ENCODE measurements at regions of chr9 and their contacts with region 1.

Region 1: GRCh38 chr9:123642291-123643278 is 286.6 kb downstream of the CRB2 start:
- DNase-seq: no peak
- ATAC-seq: no peak
- H3K4me3 ChIP-seq: no peak overlapping the region
- H3K4me3 Mint-ChIP-seq: no peak overlapping the region
- H3K27ac ChIP-seq: no peak overlapping the region
- H3K27ac Mint-ChIP-seq: no peak overlapping the region
- H3K4me1 ChIP-seq: peaks cover 17% of the 10 kb centered on the region
- H3K4me1 Mint-ChIP-seq: peaks cover 33% of the 10 kb centered on the region
- H3K27me3 ChIP-seq: no peaks in the 10 kb centered on the region
- H3K27me3 Mint-ChIP-seq: no peaks in the 10 kb centered on the region
- CTCF ChIP-seq: no peak

Region 2: DNA sequence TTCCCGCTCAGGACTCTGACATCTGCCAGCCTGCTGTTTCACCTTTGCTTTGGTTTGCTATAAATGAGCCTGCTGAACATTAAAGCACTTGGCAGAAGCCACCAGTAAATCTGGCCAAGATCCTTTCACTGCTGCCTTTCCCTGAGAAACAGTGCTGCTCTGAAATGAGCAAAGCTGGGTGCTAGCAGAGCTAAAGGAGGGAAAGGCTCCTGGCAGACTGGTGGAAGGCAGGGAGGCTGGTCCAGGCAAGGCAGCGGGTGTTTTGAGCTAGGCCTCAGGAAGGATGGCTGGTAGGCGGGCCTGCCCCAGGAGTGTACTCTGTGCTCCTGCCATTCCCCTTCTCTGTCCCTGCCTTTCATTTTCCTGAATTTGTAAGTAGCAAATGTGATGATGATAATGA is 1324.3 kb before region 1 on chr9:
- CTCF ChIA-PET with region 1: no interaction called
- POLR2A ChIA-PET with region 1: no interaction called
- intact Hi-C with region 1: no loop called
- DNase-seq: no peak
- ATAC-seq: no peak
- H3K4me3 ChIP-seq: no peak overlapping the region
- H3K4me3 Mint-ChIP-seq: no peak overlapping the region
- H3K27ac ChIP-seq: no peak overlapping the region
- H3K27ac Mint-ChIP-seq: no peak overlapping the region
- H3K4me1 ChIP-seq: no peaks in the 10 kb centered on the region
- H3K4me1 Mint-ChIP-seq: no peaks in the 10 kb centered on the region
- H3K27me3 ChIP-seq: no peaks in the 10 kb centered on the region
- H3K27me3 Mint-ChIP-seq: no peaks in the 10 kb centered on the region
- CTCF ChIP-seq: no peak

Region 3: GRCh38 chr9:123589361-123590239 is 53.0 kb before region 1 on chr9:
- CTCF ChIA-PET with region 1: no interaction called
- POLR2A ChIA-PET with region 1: no interaction called
- intact Hi-C with region 1: loop called in 1 of 2 experiments (anchors 5 kb)
- DNase-seq: no peak
- ATAC-seq: no peak
- H3K4me3 ChIP-seq: no peak overlapping the region
- H3K4me3 Mint-ChIP-seq: no peak overlapping the region
- H3K27ac ChIP-seq: no peak overlapping the region
- H3K27ac Mint-ChIP-seq: no peak overlapping the region
- H3K4me1 ChIP-seq: no peaks in the 10 kb centered on the region
- H3K4me1 Mint-ChIP-seq: no peaks in the 10 kb centered on the region
- H3K27me3 ChIP-seq: no peaks in the 10 kb centered on the region
- H3K27me3 Mint-ChIP-seq: no peaks in the 10 kb centered on the region
- CTCF ChIP-seq: no peak

Region 4: DNA sequence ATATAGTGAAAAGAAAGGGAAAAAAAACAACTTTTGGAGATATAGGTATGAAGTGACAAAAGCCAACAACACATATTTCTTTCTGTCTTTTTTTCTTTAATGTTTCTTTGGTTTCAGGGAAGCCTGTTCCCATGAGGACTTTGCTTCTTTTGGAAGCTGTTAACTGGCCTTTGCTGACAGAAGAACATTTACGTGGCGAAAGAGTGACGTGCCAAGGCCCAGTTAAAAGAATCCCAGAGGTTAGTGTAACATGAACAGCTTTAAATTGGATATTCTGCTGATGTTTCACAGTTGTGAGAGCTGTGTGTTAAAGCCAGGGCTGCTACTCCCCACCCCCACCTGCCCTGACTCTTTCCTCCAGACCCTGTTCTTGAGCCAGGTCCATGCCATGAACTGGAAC is 10.7 kb before region 1 on chr9:
- CTCF ChIA-PET with region 1: no interaction called
- POLR2A ChIA-PET with region 1: no interaction called
- intact Hi-C with region 1: no loop called
- DNase-seq: no peak
- ATAC-seq: no peak
- H3K4me3 ChIP-seq: no peak overlapping the region
- H3K4me3 Mint-ChIP-seq: no peak overlapping the region
- H3K27ac ChIP-seq: no peak overlapping the region
- H3K27ac Mint-ChIP-seq: no peak overlapping the region
- H3K4me1 ChIP-seq: no peaks in the 10 kb centered on the region
- H3K4me1 Mint-ChIP-seq: peaks cover 9% of the 10 kb centered on the region
- H3K27me3 ChIP-seq: no peaks in the 10 kb centered on the region
- H3K27me3 Mint-ChIP-seq: no peaks in the 10 kb centered on the region
- CTCF ChIP-seq: no peak

Region 5: GRCh38 chr9:123945532-123945931 is 302.9 kb after region 1 on chr9:
- CTCF ChIA-PET with region 1: no interaction called
- POLR2A ChIA-PET with region 1: no interaction called
- intact Hi-C with region 1: no loop called
- DNase-seq: no peak
- ATAC-seq: no peak
- H3K4me3 ChIP-seq: no peak overlapping the region
- H3K4me3 Mint-ChIP-seq: no peak overlapping the region
- H3K27ac ChIP-seq: no peak overlapping the region
- H3K27ac Mint-ChIP-seq: no peak overlapping the region
- H3K4me1 ChIP-seq: no peaks in the 10 kb centered on the region
- H3K4me1 Mint-ChIP-seq: no peaks in the 10 kb centered on the region
- H3K27me3 ChIP-seq: no peaks in the 10 kb centered on the region
- H3K27me3 Mint-ChIP-seq: peaks cover 7% of the 10 kb centered on the region
- CTCF ChIP-seq: no peak

Measured in CD4-positive, alpha-beta T cell (primary cell).